ENCODE measurements at regions of chr1 and their contacts with region 1.

Region 1: DNA sequence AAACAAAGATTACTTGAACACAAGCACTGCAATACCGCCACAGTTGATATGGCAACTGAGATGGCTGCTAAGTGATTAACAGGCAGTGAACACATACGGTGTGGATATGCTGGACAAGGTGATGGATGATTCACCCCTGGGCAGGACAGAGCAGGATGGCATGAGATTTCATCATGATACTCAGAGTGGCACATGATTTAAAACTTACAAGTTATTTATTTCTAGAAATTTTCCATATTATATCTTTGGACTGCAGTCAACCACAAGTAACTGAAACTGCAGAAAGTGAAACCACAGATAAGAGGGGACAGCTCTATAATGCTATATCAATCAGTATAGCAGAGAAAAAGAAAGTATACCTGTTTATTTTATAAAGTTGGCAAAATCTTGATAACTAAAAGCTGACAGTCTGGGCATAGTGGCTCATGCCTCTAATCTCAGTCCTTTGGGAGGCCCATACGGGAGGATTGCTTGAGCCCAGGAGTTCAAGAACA is 47.9 kb downstream of the PHACTR4 start:
- DNase-seq: no peak

Region 2: GRCh38 chr1:28447679-28448078 is 30.2 kb after region 1 on chr1:
- intact Hi-C with region 1: no loop called
- DNase-seq: no peak

Region 3: GRCh38 chr1:28470146-28470545 is 52.7 kb after region 1 on chr1:
- intact Hi-C with region 1: loop called (anchors 10 kb)
- DNase-seq: no peak

Region 4: DNA sequence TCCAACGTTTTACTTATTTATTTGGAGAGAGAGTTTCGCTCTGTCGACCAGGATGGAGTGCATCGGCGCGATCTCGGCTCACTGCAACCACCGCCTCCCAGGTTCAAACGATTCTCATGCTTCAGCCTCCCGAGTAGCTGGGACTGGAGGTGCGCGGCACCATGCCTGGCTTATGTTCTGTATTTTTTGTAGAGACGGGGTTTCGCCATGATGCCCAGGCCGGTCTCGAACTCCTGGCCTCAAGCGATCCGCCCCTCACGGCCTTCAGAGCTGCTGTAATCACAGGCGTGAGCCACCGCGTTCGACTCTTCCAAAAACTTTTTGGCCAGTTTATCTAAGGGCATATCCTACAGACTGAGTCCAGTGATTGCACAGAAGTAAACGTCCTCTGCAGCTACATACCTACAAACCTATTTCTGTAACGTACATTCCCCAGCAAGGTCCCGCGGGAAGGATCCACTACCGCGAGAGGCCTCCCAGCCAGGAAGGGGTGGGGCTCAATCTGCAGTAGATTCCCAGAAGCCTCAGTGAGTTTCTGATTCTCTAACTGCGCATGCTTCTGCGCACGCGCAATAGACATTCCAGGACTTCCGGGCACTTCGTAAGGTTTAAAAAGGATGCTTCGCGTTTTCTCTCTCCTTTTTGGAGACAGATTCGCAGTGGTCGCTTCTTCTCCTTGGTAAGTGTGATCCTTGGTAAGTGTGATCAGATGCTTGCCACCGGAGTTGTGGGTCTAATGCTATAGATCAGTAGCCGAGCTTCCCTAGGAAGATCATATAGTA is 88.1 kb after region 1 on chr1 and contains the start of gene RCC1:
- intact Hi-C with region 1: no loop called
- DNase-seq: peak; percentile 97
- total RNA-seq, gene RCC1: 4.1 TPM

Region 5: DNA sequence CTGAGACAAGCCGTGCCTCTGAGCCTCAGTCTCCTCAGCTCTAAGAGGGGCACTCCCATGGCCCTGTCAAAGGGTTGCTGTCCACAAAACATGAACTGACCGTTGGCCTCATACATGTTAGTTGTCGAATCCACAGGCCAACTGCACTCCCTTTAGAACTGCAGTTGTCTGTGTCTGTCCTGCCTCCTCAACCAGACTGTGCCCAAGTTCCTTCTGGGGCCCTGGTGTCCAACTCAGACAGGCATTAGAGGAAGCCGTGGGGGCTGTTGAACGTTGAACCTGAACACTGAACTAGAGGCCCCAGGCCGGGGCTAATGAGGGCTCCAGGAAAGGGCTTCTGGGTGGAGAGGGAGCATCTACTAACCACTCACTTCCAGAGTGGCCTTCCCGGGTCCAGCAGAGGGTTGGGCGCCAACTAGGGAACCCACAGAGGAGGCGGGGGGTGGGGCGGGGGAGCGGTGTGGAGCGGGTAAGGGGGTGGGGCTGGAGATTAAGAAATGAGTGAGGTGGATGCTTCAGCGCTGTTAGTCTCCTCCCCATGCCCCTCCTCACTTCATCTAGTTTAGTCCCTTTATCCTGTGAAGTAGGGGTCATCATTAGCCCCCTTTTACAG is 174.3 kb after region 1 on chr1 and contains the start of gene RAB42:
- intact Hi-C with region 1: no loop called
- DNase-seq: no peak
- total RNA-seq, gene RAB42: 1.1 TPM